Activated CD4-positive, alpha-beta memory T cell treated with anti-CD3 and anti-CD28 coated beads for 36 hours (primary cell): ENCODE measurements at regions of chr1 and their contacts with region 1.

Region 1: GRCh38 chr1:89605692-89606091 is 27.2 kb upstream of the LRRC8C start:
- DNase-seq: no peak
- H3K4me3 Mint-ChIP-seq: peak overlapping the region; percentile 43
- H3K27ac Mint-ChIP-seq: peak overlapping the region; percentile 100
- H3K4me1 Mint-ChIP-seq: peaks cover 98% of the 10 kb centered on the region
- H3K27me3 Mint-ChIP-seq: no peaks in the 10 kb centered on the region

Region 2: DNA sequence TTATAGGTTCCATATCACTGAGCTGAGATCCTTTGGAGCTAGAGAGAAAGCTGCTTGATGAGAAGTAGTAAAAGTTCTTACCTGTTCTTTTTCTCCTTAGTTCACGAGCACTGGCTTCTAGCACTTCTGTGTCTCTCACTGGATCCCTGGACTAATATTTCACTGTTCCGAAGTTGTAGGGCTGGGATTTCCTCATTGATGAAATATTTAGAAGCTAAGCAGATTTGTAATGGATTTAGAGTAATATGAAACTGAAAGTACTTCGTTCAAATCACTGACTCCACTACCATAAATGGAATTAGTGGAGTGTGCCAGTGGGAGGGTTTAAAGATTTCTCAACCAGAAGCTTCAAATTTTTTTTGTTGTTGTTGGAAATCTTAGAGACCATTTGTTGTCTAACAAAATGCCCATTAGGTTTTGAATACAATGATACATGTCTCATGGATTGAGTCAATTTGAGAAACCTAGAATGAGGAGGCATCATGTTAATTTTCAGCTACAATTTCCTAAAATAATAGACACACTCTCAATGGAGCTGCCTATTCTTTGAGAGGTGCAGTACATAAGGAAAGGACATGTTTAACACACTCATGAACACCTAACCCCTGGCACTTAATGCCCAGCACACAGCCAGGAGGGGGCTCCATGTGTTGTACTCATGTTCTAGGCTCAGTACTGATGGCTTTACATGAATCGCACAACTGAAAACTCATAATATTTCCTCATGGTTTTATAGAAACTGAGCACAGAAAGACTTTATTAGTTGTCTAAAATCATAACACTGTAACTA is 540.4 kb before region 1 on chr1 and contains the start of gene GBP1:
- CTCF ChIA-PET with region 1: no interaction called
- POLR2A ChIA-PET with region 1: no interaction called
- intact Hi-C with region 1: loop called (anchors 5 kb)
- DNase-seq: no peak
- H3K4me3 Mint-ChIP-seq: peak within 1 kb of the TSS; percentile 87
- H3K27ac Mint-ChIP-seq: peak within 1 kb of the TSS; percentile 91
- H3K4me1 Mint-ChIP-seq: peaks cover 56% of the 10 kb centered on the region
- H3K27me3 Mint-ChIP-seq: no peaks in the 10 kb centered on the region
- total RNA-seq, gene GBP1: 66.9 to 67.9 TPM

Region 3: DNA sequence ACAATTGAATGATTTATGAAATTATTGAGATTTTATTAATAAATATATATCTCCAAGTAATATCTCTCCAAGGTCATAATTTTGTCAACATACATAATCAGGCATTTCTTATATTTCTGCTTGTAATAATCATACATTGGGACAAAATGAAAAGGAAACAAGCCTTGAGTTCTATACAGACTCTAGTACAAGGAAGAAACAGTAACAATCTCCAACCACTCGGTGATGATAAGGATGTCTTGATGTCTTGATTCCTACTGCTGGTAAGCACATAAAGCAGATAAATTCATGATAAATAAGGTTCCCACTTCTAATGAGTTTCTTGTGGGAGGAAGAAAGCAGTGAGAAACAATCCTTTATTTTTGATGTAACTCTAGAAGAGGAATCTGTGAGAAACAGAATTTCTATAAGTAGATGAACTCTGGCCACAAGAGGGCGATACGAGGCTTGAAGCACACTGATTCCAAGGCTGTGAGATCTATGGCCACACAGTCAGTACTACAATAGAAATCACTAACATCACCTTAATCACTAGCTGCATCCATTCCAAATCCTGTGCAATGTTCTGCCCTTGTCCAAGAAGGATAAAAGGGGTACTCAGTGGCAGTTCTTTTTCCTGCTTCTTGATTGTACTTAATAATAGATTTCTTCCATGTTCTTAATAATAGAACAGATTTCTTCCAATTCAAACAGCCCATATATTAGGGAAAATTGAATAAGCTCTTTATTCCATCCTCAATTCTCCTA is 122.5 kb before region 1 on chr1:
- CTCF ChIA-PET with region 1: interaction called, 37 read pairs
- POLR2A ChIA-PET with region 1: interaction called, 4 read pairs
- intact Hi-C with region 1: no loop called
- DNase-seq: peak; percentile 85
- H3K4me3 Mint-ChIP-seq: no peak overlapping the region
- H3K27ac Mint-ChIP-seq: no peak overlapping the region
- H3K4me1 Mint-ChIP-seq: peaks cover 18% of the 10 kb centered on the region
- H3K27me3 Mint-ChIP-seq: no peaks in the 10 kb centered on the region

Region 4: DNA sequence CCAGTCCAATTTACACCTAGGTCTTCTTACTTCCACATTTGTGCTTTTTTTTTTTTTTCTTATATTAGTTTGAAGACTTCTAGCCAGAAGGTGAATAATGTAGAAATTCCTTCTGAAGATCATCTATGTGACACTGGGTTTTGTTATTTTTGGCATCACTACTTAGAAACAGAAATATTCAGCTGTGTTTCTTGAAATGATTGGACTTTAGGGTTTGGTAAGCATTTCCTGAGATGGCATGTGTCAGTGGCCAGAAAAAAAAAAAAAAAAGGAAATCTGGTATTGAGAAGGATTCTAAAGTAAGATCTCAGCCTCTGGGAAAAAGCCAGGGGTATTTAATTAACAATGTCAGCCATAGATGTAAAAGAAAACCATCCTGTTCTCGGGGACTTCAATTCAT is 16.2 kb before region 1 on chr1:
- CTCF ChIA-PET with region 1: interaction called, 5 read pairs
- POLR2A ChIA-PET with region 1: interaction called, 13 read pairs
- intact Hi-C with region 1: loop called (anchors 1 kb)
- DNase-seq: no peak
- H3K4me3 Mint-ChIP-seq: no peak overlapping the region
- H3K27ac Mint-ChIP-seq: peak overlapping the region; percentile 69
- H3K4me1 Mint-ChIP-seq: peaks cover 86% of the 10 kb centered on the region
- H3K27me3 Mint-ChIP-seq: no peaks in the 10 kb centered on the region

Region 5: GRCh38 chr1:89675677-89676076 is 70.0 kb after region 1 on chr1:
- CTCF ChIA-PET with region 1: interaction called, 3 read pairs
- POLR2A ChIA-PET with region 1: interaction called, 5 read pairs
- intact Hi-C with region 1: loop called (anchors 2 kb)
- DNase-seq: no peak
- H3K4me3 Mint-ChIP-seq: no peak overlapping the region
- H3K27ac Mint-ChIP-seq: peak overlapping the region; percentile 83
- H3K4me1 Mint-ChIP-seq: peaks cover 86% of the 10 kb centered on the region
- H3K27me3 Mint-ChIP-seq: no peaks in the 10 kb centered on the region

Region 6: GRCh38 chr1:89855413-89856123 is 249.9 kb after region 1 on chr1:
- CTCF ChIA-PET with region 1: no interaction called
- POLR2A ChIA-PET with region 1: no interaction called
- intact Hi-C with region 1: loop called (anchors 5 kb)
- DNase-seq: no peak
- H3K4me3 Mint-ChIP-seq: no peak overlapping the region
- H3K27ac Mint-ChIP-seq: no peak overlapping the region
- H3K4me1 Mint-ChIP-seq: peaks cover 18% of the 10 kb centered on the region
- H3K27me3 Mint-ChIP-seq: no peaks in the 10 kb centered on the region